ENCODE measurements at regions of chr3 and their contacts with region 1.

Region 1: GRCh38 chr3:90091204-90091924 is 983.9 kb downstream of the EPHA3 start:
- DNase-seq: no peak
- ATAC-seq: peak; percentile 94
- H3K4me3 ChIP-seq: no peak overlapping the region
- H3K27ac ChIP-seq: no peak overlapping the region
- H3K4me1 ChIP-seq: no peaks in the 10 kb centered on the region
- H3K27me3 ChIP-seq: no peaks in the 10 kb centered on the region
- CTCF ChIP-seq: peak; percentile 22 to 49 (median 42); a peak in 4 of 6 replicates
- EP300 ChIP-seq: no peak
- POLR2A ChIP-seq: no peak
- RAD21 ChIP-seq: peak; percentile 60

Region 2: DNA sequence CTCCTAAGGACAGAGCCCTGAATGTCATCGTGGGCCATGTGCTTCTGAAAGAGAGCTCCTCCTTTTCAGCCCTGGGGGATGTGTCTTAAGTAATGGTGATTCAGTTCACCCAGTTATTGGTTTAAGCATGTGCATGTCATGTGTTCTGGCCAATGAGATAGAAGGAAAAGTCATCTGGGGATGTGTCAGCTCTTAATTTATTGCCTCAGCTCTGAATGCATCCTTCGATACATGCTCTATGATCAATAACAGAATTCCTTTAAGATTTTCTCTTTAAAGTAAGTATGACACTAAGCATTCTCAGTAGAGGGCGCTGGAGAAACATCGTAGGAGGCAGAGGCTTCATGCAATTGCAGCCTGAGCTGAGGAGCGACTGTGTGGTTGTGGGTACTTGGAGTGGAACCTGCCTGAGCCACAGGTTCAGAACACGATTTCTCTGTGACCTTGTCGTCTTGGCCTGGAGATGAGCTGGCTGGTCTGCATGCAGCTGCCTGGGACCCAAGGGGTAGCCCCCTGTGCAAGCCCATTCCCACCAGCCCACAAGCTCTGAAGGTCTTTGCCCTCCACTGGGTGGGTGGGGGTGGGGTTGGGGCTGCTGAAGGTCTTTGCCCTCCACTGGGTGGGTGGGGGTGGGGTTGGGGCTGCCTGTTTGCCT is 1872.1 kb before region 1 on chr3:
- CTCF ChIA-PET with region 1: interaction called, 20 read pairs
- POLR2A ChIA-PET with region 1: no interaction called
- RAD21 ChIA-PET with region 1: interaction called, 9 read pairs
- SMC1A ChIA-PET with region 1: interaction called, 15 read pairs
- in situ Hi-C with region 1: loop called (anchors 25 kb)
- intact Hi-C with region 1: no loop called
- DNase-seq: no peak
- ATAC-seq: peak; percentile 92
- H3K4me3 ChIP-seq: no peak overlapping the region
- H3K27ac ChIP-seq: no peak overlapping the region
- H3K4me1 ChIP-seq: no peaks in the 10 kb centered on the region
- H3K27me3 ChIP-seq: no peaks in the 10 kb centered on the region
- CTCF ChIP-seq: peak; percentile 50 to 65 (median 55)
- EP300 ChIP-seq: no peak
- POLR2A ChIP-seq: no peak
- RAD21 ChIP-seq: peak; percentile 87

Region 3: GRCh38 chr3:88298189-88298588 is 1793.2 kb before region 1 on chr3:
- CTCF ChIA-PET with region 1: no interaction called
- POLR2A ChIA-PET with region 1: no interaction called
- RAD21 ChIA-PET with region 1: no interaction called
- SMC1A ChIA-PET with region 1: no interaction called
- in situ Hi-C with region 1: no loop called
- intact Hi-C with region 1: no loop called
- DNase-seq: no peak
- ATAC-seq: no peak
- H3K4me3 ChIP-seq: no peak overlapping the region
- H3K27ac ChIP-seq: no peak overlapping the region
- H3K4me1 ChIP-seq: no peaks in the 10 kb centered on the region
- H3K27me3 ChIP-seq: no peaks in the 10 kb centered on the region
- CTCF ChIP-seq: no peak
- EP300 ChIP-seq: no peak
- POLR2A ChIP-seq: no peak
- RAD21 ChIP-seq: no peak

Region 4: GRCh38 chr3:89527736-89528305 is 563.5 kb before region 1 on chr3:
- CTCF ChIA-PET with region 1: no interaction called
- POLR2A ChIA-PET with region 1: no interaction called
- RAD21 ChIA-PET with region 1: interaction called, 3 read pairs
- SMC1A ChIA-PET with region 1: interaction called, 11 read pairs
- in situ Hi-C with region 1: no loop called
- intact Hi-C with region 1: no loop called
- DNase-seq: no peak
- ATAC-seq: no peak
- H3K4me3 ChIP-seq: no peak overlapping the region
- H3K27ac ChIP-seq: no peak overlapping the region
- H3K4me1 ChIP-seq: no peaks in the 10 kb centered on the region
- H3K27me3 ChIP-seq: no peaks in the 10 kb centered on the region
- CTCF ChIP-seq: no peak
- EP300 ChIP-seq: no peak
- POLR2A ChIP-seq: no peak
- RAD21 ChIP-seq: no peak

Region 5: GRCh38 chr3:89762405-89762804 is 329.0 kb before region 1 on chr3:
- CTCF ChIA-PET with region 1: no interaction called
- POLR2A ChIA-PET with region 1: no interaction called
- RAD21 ChIA-PET with region 1: no interaction called
- SMC1A ChIA-PET with region 1: no interaction called
- in situ Hi-C with region 1: no loop called
- intact Hi-C with region 1: no loop called
- DNase-seq: no peak
- ATAC-seq: no peak
- H3K4me3 ChIP-seq: no peak overlapping the region
- H3K27ac ChIP-seq: no peak overlapping the region
- H3K4me1 ChIP-seq: no peaks in the 10 kb centered on the region
- H3K27me3 ChIP-seq: no peaks in the 10 kb centered on the region
- CTCF ChIP-seq: no peak
- EP300 ChIP-seq: no peak
- POLR2A ChIP-seq: no peak
- RAD21 ChIP-seq: no peak

Region 6: DNA sequence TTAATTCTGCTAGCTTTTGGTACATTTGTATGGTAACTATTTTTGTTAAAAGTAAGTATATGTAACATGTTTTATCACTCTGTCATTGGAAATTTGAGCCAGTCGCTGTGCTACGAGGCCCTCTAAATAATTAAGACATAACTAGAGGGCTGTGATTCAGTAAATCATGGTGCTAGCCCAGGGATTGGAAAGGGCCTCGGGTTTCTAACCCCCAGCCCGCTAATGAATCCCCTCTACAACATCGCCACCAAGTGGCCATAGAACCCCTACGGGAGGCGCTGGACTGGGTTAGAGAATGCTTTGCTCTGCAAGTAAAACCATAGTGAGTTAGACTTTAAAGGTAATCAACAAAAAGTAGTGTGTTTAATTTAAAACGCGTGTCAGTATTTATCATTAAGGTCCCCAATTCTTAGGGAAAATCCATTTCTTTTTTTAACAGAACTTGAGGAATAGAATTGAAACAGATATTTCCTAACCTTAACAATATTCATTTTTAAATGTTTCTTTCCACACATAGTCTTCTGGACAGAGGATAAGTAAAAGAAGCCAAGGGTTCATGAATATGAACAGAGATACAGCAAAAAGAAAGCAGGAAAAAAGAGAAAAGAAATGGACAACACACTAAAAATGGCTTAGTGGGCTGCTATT is 239.3 kb before region 1 on chr3:
- CTCF ChIA-PET with region 1: interaction called, 21 read pairs
- POLR2A ChIA-PET with region 1: no interaction called
- RAD21 ChIA-PET with region 1: interaction called, 8 read pairs
- SMC1A ChIA-PET with region 1: interaction called, 18 read pairs
- in situ Hi-C with region 1: no loop called
- intact Hi-C with region 1: loop called (anchors 2 kb)
- DNase-seq: no peak
- ATAC-seq: peak; percentile 79
- H3K4me3 ChIP-seq: no peak overlapping the region
- H3K27ac ChIP-seq: no peak overlapping the region
- H3K4me1 ChIP-seq: no peaks in the 10 kb centered on the region
- H3K27me3 ChIP-seq: no peaks in the 10 kb centered on the region
- CTCF ChIP-seq: peak in 2 of 3 experiments; percentile 10 to 34; a peak in 3 of 6 replicates
- EP300 ChIP-seq: no peak
- POLR2A ChIP-seq: no peak
- RAD21 ChIP-seq: peak; percentile 45; the same call in 1 of the 2 replicates

Region 7: DNA sequence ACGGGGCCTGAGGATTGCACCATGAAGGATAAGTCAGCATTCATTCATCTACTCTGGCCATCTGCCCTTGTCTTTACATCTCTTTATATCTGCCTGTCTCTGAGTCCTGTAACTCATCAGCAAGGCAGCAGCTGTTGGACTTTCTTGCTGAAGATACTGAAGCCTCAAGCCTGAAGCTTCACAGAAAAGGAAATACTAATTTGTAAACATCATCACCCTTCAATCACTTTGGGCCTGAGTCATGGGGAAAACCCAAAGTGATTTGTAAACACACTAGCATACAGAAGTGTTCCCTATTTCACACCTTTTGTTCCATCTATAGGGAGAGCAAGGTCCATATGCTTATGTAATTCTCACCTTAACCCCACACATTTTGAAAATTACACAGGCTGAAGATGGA is 55.7 kb before region 1 on chr3:
- CTCF ChIA-PET with region 1: interaction called, 28 read pairs
- POLR2A ChIA-PET with region 1: no interaction called
- RAD21 ChIA-PET with region 1: interaction called, 25 read pairs
- SMC1A ChIA-PET with region 1: interaction called, 14 read pairs
- in situ Hi-C with region 1: no loop called
- intact Hi-C with region 1: no loop called
- DNase-seq: no peak
- ATAC-seq: peak; percentile 80
- H3K4me3 ChIP-seq: no peak overlapping the region
- H3K27ac ChIP-seq: no peak overlapping the region
- H3K4me1 ChIP-seq: no peaks in the 10 kb centered on the region
- H3K27me3 ChIP-seq: no peaks in the 10 kb centered on the region
- CTCF ChIP-seq: no peak
- EP300 ChIP-seq: peak; percentile 77 to 84; a peak in 2 of 4 replicates
- POLR2A ChIP-seq: no peak
- RAD21 ChIP-seq: no peak

Region 8: DNA sequence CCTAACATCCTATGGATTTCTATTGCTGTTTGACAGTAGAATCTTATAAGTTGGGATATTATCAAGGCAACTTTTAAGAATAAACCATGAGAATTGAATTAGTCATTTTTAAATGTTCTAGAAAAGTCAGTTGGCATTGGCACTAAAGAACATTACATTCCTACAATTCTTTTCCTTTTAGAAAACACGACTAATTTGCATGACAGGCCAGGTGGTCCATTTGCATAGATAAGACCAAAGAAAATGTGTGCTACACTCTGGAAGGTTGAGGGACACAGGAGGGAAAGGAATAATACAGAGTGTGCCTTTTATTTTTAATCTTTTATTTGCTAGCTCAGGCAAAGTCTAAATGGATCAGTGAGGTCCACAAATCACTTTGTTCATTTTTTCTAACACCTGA is 21.6 kb before region 1 on chr3:
- CTCF ChIA-PET with region 1: interaction called, 7 read pairs
- POLR2A ChIA-PET with region 1: no interaction called
- RAD21 ChIA-PET with region 1: interaction called, 3 read pairs
- SMC1A ChIA-PET with region 1: interaction called, 12 read pairs
- in situ Hi-C with region 1: no loop called
- intact Hi-C with region 1: no loop called
- DNase-seq: no peak
- ATAC-seq: no peak
- H3K4me3 ChIP-seq: no peak overlapping the region
- H3K27ac ChIP-seq: no peak overlapping the region
- H3K4me1 ChIP-seq: no peaks in the 10 kb centered on the region
- H3K27me3 ChIP-seq: no peaks in the 10 kb centered on the region
- CTCF ChIP-seq: no peak
- EP300 ChIP-seq: no peak
- POLR2A ChIP-seq: no peak
- RAD21 ChIP-seq: no peak